Activated B cell treated with CpG ODN at 0.5 μM for 24 hours (primary cell): ENCODE measurements at regions of chr22 and their contacts with region 1.

Region 1: DNA sequence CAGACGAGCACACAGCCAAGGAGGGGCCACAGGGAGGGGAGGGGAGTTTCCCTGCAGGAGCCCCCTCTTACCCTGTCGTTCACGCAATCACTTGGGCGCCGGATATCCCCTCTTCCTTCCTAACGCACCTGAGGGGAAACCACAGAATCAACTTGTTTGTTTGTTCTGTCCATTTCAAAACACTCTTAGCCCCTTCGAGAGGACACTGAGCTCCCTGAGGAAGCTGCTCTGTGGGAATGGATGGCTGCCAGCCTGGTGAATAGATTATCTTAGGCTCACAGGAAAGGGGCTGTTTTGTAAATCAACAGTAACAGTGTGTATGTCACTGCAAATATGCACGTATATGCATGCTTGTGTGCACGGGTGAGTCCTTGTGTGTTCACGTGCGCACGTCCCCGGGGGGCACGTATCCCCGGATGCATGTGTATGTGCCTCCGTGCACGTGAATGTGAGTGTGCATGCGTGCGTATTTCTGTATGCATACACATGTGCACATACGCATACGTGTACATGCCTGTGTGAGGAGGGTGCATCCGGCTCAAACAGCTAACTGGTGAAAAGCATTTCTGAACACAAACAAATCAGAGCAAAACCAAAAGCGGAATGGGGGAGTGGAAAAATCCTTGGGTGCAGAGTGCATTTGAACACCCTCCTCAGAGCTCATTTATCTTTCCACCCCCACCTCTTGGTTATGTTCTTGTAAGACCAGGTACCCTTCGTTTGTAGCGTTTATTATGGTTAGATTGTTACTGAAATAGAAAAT is 7.2 kb downstream of the ARSA start:
- DNase-seq: peak; percentile 74
- ATAC-seq: peak; percentile 79
- H3K4me3 Mint-ChIP-seq: peak overlapping the region; percentile 85
- H3K27ac Mint-ChIP-seq: peak overlapping the region; percentile 94
- H3K4me1 Mint-ChIP-seq: peaks cover 32% of the 10 kb centered on the region
- H3K27me3 Mint-ChIP-seq: no peaks in the 10 kb centered on the region
- CTCF ChIP-seq: no peak

Region 2: DNA sequence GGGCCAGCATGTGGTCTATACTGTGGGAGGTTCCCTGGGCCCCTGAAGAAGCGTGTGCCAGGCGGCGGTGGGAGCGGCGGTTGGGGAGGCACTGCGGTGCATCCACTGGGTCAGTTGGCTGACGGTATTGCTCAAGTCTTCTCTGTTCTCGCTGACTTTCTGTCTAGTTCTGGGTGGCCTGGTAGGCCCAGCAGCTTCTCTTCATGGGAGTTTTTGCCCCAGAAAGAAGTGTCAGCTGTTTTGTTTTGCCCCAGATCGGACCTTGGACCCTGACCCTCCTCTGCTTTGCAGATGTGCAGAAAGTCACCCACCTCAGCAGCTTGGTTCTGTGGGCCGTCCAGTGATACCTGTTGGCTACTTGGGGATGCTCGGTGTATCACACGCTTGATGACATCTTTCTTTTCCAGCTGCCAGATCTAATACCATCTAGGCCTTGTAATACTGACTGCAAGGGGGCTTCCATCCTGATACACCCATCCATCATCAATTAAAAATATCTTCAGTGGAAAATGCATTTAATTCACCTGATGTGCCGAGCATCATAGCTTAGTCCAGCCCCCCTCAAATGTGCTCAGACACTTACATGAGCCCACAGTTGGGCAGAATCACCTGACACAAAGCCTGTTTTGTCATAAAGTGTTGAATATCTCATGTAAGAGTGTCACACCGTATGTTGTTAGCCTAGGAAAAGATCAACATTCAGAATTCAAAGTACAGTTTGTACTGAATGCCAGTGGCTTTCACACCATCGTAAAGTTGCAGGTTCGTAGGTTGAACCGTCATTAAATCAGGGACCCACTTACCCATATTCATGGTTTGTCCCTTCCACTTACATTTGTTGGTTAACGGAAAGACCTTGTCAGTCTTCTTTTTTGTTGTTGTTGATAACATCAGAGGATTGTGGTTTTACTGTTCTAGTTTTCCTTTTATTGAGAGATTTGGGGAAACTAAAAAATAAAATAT is 753.2 kb before region 1 on chr22:
- CTCF ChIA-PET with region 1: no interaction called
- POLR2A ChIA-PET with region 1: no interaction called
- intact Hi-C with region 1: no loop called
- DNase-seq: no peak
- ATAC-seq: no peak
- H3K4me3 Mint-ChIP-seq: no peak overlapping the region
- H3K27ac Mint-ChIP-seq: no peak overlapping the region
- H3K4me1 Mint-ChIP-seq: peaks cover 14% of the 10 kb centered on the region
- H3K27me3 Mint-ChIP-seq: no peaks in the 10 kb centered on the region
- CTCF ChIP-seq: no peak

Region 3: GRCh38 chr22:50250555-50251476 is 370.0 kb before region 1 on chr22 and contains the start of gene HDAC10:
- CTCF ChIA-PET with region 1: interaction called, 6 read pairs
- POLR2A ChIA-PET with region 1: interaction called, 13 read pairs
- intact Hi-C with region 1: no loop called
- DNase-seq: peak; percentile 76
- ATAC-seq: peak; percentile 82
- H3K4me3 Mint-ChIP-seq: peak within 1 kb of the TSS; percentile 84
- H3K27ac Mint-ChIP-seq: peak within 1 kb of the TSS; percentile 4
- H3K4me1 Mint-ChIP-seq: peaks cover 25% of the 10 kb centered on the region
- H3K27me3 Mint-ChIP-seq: no peaks in the 10 kb centered on the region
- CTCF ChIP-seq: no peak
- total RNA-seq, gene HDAC10: 65.0 and 68.2 TPM in 2 replicates

Region 4: GRCh38 chr22:50326959-50327710 is 293.6 kb before region 1 on chr22 and contains the start of gene DENND6B:
- CTCF ChIA-PET with region 1: interaction called, 3 read pairs
- POLR2A ChIA-PET with region 1: interaction called, 3 read pairs
- intact Hi-C with region 1: loop called (anchors 2 kb)
- DNase-seq: peak; percentile 82
- ATAC-seq: peak; percentile 92
- H3K4me3 Mint-ChIP-seq: peak within 1 kb of the TSS; percentile 86
- H3K27ac Mint-ChIP-seq: peak within 1 kb of the TSS; percentile 76
- H3K4me1 Mint-ChIP-seq: peaks cover 20% of the 10 kb centered on the region
- H3K27me3 Mint-ChIP-seq: peaks cover 3% of the 10 kb centered on the region
- CTCF ChIP-seq: no peak
- total RNA-seq, gene DENND6B: 3.2 and 5.2 TPM in 2 replicates

Region 5: GRCh38 chr22:50469377-50470305 is 151.1 kb before region 1 on chr22:
- CTCF ChIA-PET with region 1: interaction called, 9 read pairs
- POLR2A ChIA-PET with region 1: interaction called, 5 read pairs
- intact Hi-C with region 1: loop called (anchors 1 kb)
- DNase-seq: peak; percentile 84
- ATAC-seq: peak; percentile 81
- H3K4me3 Mint-ChIP-seq: peak overlapping the region; percentile 68
- H3K27ac Mint-ChIP-seq: peak overlapping the region; percentile 88
- H3K4me1 Mint-ChIP-seq: peaks cover 69% of the 10 kb centered on the region
- H3K27me3 Mint-ChIP-seq: no peaks in the 10 kb centered on the region
- CTCF ChIP-seq: no peak

Region 6: DNA sequence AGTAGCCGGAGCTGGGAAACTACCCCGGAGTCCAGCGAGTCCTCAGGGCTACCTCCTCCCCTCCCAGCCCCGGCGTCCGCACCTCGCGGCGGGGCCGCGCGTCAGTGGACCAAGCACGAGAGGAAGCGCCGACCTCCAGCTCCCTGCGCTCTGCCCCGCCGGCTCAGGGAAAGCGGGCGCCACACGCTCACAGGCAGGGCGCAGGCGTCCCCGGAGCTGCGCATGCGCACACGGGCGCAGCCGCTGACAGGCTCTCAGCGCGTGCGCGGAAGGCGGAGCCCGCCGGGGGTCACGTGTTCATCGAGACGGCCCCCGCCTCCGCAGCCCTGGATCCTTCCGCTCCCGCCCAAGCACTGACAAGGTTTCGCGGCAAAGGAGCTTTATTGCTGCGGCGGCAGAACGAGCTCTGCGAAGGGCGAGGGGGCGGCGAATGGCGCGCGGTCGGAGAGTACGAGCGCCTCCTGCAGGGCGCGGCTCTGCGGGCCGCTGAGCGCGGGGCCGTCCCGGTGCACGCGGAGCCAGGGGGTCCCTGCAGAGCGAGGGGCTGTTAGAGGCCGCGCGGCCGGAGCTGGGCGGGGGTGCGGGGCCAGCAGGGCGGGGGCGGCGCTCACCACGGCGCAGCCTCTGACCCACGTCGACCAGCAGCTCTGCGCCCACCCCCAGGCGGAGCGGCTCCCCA is 95.2 kb before region 1 on chr22 and contains the start of gene SCO2:
- CTCF ChIA-PET with region 1: interaction called, 40 read pairs
- POLR2A ChIA-PET with region 1: interaction called, 94 read pairs
- intact Hi-C with region 1: loop called (anchors 1 kb)
- DNase-seq: peak; percentile 97
- ATAC-seq: peak; percentile 52
- H3K4me3 Mint-ChIP-seq: peak within 1 kb of the TSS; percentile 84
- H3K27ac Mint-ChIP-seq: peak within 1 kb of the TSS; percentile 90
- H3K4me1 Mint-ChIP-seq: peaks cover 33% of the 10 kb centered on the region
- H3K27me3 Mint-ChIP-seq: no peaks in the 10 kb centered on the region
- CTCF ChIP-seq: no peak
- total RNA-seq, gene SCO2: 7.1 and 11.6 TPM in 2 replicates

Region 7: GRCh38 chr22:50544078-50544745 is 76.6 kb before region 1 on chr22:
- CTCF ChIA-PET with region 1: interaction called, 14 read pairs
- POLR2A ChIA-PET with region 1: interaction called, 35 read pairs
- intact Hi-C with region 1: loop called (anchors 1 kb)
- DNase-seq: peak; percentile 80
- ATAC-seq: peak; percentile 38
- H3K4me3 Mint-ChIP-seq: peak overlapping the region; percentile 60
- H3K27ac Mint-ChIP-seq: peak overlapping the region; percentile 82
- H3K4me1 Mint-ChIP-seq: peaks cover 56% of the 10 kb centered on the region
- H3K27me3 Mint-ChIP-seq: no peaks in the 10 kb centered on the region
- CTCF ChIP-seq: no peak

Region 8: GRCh38 chr22:50610041-50610451 is 10.7 kb before region 1 on chr22:
- CTCF ChIA-PET with region 1: no interaction called
- POLR2A ChIA-PET with region 1: no interaction called
- intact Hi-C with region 1: no loop called
- DNase-seq: no peak
- ATAC-seq: no peak
- H3K4me3 Mint-ChIP-seq: no peak overlapping the region
- H3K27ac Mint-ChIP-seq: no peak overlapping the region
- H3K4me1 Mint-ChIP-seq: no peaks in the 10 kb centered on the region
- H3K27me3 Mint-ChIP-seq: peaks cover 42% of the 10 kb centered on the region
- CTCF ChIP-seq: no peak